Psoas muscle (tissue), 8 donors: ENCODE measurements at regions of chr9 and their contacts with region 1.

Region 1: GRCh38 chr9:70120834-70121510 is 77.3 kb downstream of the MAMDC2 start:
- DNase-seq: peak; percentile 83 to 87
- ATAC-seq: peak; percentile 93 to 98 (median 97)
- H3K4me3 ChIP-seq: no peak overlapping the region
- H3K27ac ChIP-seq: peak overlapping the region; percentile 41
- H3K4me1 ChIP-seq: peaks cover 17% of the 10 kb centered on the region
- H3K27me3 ChIP-seq: no peaks in the 10 kb centered on the region
- CTCF ChIP-seq: peak; percentile 13

Region 2: GRCh38 chr9:70003901-70004714 is 116.9 kb before region 1 on chr9:
- intact Hi-C with region 1: no loop called
- DNase-seq: no peak
- ATAC-seq: no peak
- H3K4me3 ChIP-seq: no peak overlapping the region
- H3K27ac ChIP-seq: no peak overlapping the region
- H3K4me1 ChIP-seq: no peaks in the 10 kb centered on the region
- H3K27me3 ChIP-seq: no peaks in the 10 kb centered on the region
- CTCF ChIP-seq: no peak

Region 3: GRCh38 chr9:70609542-70610286 is 488.7 kb after region 1 on chr9:
- intact Hi-C with region 1: loop called in 1 of 2 experiments (anchors 10 kb)
- DNase-seq: peak; percentile 58 to 64
- ATAC-seq: peak; percentile 92 to 95 (median 92)
- H3K4me3 ChIP-seq: no peak overlapping the region
- H3K27ac ChIP-seq: peak overlapping the region; percentile 75
- H3K4me1 ChIP-seq: peaks cover 47% of the 10 kb centered on the region
- H3K27me3 ChIP-seq: no peaks in the 10 kb centered on the region
- CTCF ChIP-seq: no peak